AG04449 (cell line): ENCODE measurements at regions of chr13 and their contacts with region 1.

Region 1: GRCh38 chr13:110715395-110716235 is 2.1 kb downstream of the ING1 start:
- DNase-seq: peak; percentile 99
- H3K4me3 ChIP-seq: peak overlapping the region; percentile 92
- CTCF ChIP-seq: peak; percentile 31

Region 2: DNA sequence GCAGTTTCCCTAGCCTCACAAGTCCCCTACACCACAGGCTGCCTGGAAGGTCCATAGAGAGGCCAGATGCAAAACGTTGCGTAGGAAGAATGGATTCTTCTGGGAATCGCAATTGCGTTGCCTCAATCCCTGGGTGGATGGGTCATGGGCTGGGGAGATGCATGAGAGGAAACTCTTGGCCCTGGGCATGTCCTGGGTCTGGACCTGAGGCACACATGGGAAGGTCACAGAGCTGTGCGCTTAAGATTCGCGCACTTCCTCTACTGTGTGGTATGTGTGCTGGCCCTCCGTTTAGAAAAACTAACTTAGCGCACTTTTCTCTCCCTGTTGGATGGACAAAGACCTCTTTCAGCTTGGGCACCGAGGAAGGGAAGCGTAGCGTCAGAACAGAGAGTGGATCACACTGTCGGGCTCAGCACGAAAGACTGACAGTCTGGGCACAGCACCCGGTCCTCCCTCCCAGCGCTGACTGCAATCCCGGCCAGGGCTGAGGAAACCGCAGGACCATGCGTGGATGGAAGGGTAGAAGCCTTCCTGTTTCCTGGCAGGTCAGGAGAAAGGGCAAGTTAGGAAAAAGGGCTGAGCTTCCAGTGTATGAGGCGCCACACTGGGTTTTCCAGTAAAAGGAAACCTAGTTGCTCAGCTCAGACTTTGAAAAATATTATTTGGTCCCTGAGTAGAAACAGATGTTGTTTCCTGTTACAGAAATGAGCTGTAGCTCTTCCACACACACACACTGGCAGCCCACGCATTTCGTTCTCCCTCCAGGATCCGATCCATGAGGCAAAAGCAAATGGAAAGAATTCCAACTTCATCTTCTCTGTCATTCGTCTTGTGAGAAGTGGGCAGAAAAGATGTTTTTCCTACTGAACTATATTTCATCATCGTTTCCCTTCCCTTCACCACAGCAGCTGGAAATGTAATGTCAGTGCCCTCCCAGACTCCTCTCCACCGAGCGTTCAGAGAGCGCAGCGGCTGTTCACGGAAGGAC is 83.9 kb after region 1 on chr13:
- CTCF ChIA-PET with region 1: interaction called, 3 read pairs
- POLR2A ChIA-PET with region 1: interaction called, 10 read pairs
- DNase-seq: peak; percentile 45
- H3K4me3 ChIP-seq: peak overlapping the region; percentile 48
- CTCF ChIP-seq: no peak

Region 3: DNA sequence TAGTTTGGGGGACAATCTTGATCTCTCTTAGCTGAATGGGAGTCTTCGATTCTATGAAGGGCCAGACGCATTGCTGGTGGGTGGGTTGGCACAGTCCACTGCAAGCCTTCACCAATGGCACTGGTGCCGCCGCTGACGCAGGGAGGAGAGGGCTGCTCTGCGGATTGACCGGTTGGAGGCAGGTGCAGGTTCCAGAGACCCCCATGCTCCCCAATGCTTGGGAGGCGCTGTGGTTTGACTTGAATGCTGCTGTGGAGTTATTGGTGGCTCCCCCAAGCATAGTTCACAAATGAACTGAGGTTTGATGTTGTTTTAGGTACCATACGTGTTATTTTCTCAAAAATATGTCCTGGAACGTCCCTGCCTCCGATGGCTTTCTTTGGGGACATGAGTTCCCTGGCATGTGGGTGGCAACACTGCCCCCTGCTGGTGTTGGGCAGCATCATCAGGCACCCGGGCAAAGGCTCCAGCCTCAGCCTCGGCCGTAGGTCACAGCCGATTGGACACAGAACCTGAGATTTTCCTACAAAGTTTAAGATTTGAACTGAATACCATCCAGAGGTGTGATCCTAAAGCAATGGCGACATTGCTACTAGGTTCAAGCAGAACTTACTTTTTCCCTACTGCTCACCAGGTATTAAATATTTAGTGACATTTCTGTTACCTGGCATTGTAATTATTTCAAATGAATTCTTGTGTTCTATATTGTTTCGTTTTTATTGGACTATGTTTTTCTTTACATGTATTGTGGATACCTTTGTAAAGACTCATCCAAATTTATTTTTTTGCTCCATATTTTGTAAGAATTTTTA is 103.8 kb after region 1 on chr13:
- CTCF ChIA-PET with region 1: interaction called, 13 read pairs
- POLR2A ChIA-PET with region 1: interaction called, 6 read pairs
- DNase-seq: no peak
- H3K4me3 ChIP-seq: no peak overlapping the region
- CTCF ChIP-seq: peak; percentile 92

Region 4: DNA sequence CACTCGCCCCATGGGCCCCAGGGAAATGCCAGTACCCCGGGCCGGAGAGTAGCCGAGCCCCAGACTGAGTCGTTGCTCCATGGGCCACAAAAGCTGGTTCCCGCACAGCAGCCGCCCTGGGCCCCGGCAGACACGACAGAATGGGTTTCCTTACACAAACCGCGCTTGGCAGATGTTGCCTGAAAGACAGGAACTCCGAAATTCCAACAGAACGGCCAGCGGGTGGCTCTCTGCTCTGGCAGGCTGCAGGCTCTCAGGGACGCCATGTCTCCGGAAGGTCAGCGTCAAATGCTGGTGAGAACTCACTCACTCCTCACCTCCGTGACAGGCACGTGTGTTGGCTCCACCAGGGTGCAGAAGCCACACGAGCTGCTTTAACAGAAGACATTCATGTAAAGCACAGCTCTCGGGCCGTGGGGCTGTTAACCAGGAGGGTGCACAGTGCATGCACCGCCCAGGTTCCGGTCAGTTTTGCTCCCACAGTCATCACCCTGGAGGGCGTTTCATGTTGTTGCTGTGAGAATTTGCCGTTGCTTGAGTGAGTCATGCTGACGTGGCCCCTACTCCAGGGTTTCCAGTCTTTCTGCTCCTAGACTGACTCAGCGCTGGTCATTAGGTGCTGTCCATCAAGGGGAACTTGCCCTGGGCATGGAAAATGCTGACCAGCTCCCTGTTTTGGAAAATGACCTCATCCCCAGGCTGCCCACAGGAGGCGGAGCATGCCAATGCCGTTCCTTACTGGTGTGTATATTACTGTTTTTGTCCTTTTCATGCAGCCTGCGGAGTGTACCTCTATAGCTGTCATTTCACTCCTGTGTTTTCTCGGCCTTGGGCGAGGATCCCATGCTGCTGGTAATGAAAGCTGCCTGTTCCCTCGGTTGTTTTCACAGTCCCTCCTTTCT is 154.4 kb after region 1 on chr13:
- CTCF ChIA-PET with region 1: interaction called, 3 read pairs
- POLR2A ChIA-PET with region 1: interaction called, 13 read pairs
- DNase-seq: peak; percentile 96
- H3K4me3 ChIP-seq: peak overlapping the region; percentile 45
- CTCF ChIP-seq: no peak

Region 5: DNA sequence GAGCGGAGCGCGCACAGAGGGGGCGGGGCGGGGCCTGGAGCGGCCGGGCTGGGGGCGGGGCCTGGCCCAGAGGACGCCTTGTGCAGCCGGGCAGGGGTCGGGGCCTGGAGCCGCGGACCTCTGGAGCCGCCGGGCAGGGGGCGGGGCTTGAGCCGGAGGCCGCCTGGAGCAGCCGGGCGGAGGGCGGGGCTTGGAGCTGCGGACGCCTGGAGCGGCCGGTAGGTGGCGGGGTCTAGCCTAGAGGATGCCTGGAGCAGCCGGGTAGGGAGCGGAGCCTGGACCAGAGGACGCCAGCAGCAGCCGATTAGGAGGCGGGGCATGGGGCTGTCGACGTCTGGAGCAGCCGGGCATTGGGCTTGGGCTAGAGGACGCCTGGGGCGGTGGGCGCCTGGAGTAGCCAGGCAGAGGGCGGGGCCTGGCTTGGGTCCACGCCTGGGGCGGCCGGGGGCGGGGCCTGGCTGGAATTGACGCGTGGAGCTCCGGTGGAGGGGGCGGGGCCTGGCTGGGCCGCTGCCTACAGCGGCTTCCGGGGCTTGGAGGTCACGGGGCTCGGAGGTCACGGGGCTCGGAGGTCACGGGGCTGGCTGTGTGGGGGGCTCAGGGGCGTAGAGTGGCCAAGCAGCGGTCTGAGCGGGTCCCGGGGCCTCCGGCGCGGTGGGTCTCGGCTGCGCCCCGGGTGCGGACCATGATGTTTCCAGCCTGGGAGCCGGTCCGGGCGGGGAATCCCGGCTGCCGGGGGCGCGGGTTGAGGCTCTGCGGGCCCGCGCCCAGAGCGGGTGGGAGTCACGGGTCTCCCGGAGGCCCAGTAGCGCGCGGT is 199.7 kb after region 1 on chr13 and contains the start of gene ANKRD10:
- CTCF ChIA-PET with region 1: no interaction called
- POLR2A ChIA-PET with region 1: interaction called, 14 read pairs
- DNase-seq: peak; percentile 89
- H3K4me3 ChIP-seq: peak within 1 kb of the TSS; percentile 99
- CTCF ChIP-seq: peak; percentile 89